ENCODE measurements at regions of chr14 and their contacts with region 1.

Region 1: GRCh38 chr14:69153131-69153872 is 383 bp upstream of the DCAF5 start:
- DNase-seq: peak; percentile 87 to 97
- ATAC-seq: peak; percentile 89 to 97 (median 92)
- H3K4me3 ChIP-seq: peak overlapping the region; percentile 95
- H3K4me3 Mint-ChIP-seq: peak overlapping the region; percentile 95
- H3K27ac ChIP-seq: peak overlapping the region; percentile 77
- H3K27ac Mint-ChIP-seq: peak overlapping the region; percentile 86 to 94
- H3K4me1 ChIP-seq: peaks cover 12% of the 10 kb centered on the region
- H3K4me1 Mint-ChIP-seq: peaks cover 36 to 37% of the 10 kb centered on the region in 2 donors
- H3K27me3 ChIP-seq: no peaks in the 10 kb centered on the region
- H3K27me3 Mint-ChIP-seq: no peaks in the 10 kb centered on the region
- CTCF ChIP-seq: no peak

Region 2: DNA sequence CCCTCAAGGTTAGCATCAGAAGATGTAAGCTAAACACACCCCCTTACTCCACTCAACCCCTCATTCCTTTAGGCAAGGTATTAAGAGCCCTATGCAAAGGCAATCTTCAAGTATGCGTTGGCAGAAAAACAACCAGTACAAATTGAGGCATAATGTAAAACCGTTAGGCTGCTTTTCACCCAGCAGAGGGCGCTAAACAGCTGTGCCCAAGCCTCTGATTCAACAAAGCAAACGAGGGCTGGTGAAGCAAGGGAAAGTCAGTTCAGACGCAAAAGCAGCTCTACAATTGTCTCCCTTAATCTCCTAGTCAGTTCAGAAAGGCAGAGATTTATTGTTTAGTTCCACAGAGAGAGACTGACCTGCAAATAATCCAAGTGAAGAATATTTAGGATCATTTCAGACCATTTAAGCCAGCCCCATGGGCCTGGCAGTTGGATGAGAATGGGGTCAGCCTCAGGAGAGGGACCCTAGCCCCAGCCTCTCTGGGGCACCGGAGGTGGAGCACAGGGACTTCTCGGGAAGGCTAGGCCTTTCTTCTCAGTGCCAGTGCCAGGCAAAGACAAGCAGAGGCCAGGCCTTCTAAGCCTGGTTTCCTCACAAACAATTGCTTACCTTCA is 23.9 kb before region 1 on chr14:
- intact Hi-C with region 1: loop called (anchors 2 kb)
- DNase-seq: peak; percentile 50 to 92
- ATAC-seq: peak; percentile 84 to 90 (median 87)
- H3K4me3 ChIP-seq: no peak overlapping the region
- H3K4me3 Mint-ChIP-seq: no peak overlapping the region
- H3K27ac ChIP-seq: peak overlapping the region; percentile 12
- H3K27ac Mint-ChIP-seq: peak overlapping the region; percentile 34 to 85
- H3K4me1 ChIP-seq: peaks cover 8% of the 10 kb centered on the region
- H3K4me1 Mint-ChIP-seq: peaks cover 88% of the 10 kb centered on the region in 2 donors
- H3K27me3 ChIP-seq: no peaks in the 10 kb centered on the region
- H3K27me3 Mint-ChIP-seq: no peaks in the 10 kb centered on the region
- CTCF ChIP-seq: peak; percentile 92

Region 3: DNA sequence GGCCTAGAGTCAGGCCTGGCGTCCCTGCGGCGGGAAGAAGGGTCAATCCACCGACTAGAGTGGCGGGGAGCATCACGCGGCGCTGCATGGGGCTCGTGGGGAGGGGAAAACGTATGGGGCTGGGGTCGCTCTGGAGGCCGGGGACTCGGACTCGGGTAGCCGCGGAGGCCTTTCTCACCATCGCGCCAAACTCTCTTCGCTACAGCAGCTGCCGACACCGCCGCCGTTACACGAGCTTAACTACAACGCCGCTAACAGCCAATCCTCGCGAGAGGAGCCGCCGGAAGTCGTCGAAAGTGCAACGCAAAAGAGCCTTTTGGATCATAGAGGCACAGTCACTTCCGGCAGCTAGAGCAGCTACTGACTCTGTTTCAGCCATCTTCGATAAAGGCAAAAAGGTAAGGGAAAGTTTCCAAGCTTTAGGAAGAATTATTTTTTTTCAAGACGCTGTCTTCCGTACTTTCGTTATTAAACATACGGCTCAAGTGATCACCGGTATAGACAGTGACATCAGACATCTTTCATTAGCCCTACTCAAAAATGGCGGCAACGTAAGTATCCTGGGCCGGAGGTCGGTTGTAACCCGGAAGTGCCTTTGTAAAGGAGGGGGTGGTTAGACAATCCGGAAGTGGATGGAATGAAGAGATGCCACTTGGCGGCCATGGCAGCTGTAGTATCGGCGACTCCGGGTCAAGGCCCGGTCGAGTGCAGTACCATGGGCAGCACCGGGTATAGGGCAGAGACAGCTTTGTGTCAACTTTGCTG is 244.9 kb after region 1 on chr14 and contains the starts of genes ERH and SLC39A9:
- intact Hi-C with region 1: loop called (anchors 5 kb)
- DNase-seq: peak; percentile 90 to 97
- ATAC-seq: peak; percentile 85 to 94 (median 88)
- H3K4me3 ChIP-seq: peak within 1 kb of the TSS; percentile 69
- H3K4me3 Mint-ChIP-seq: peak within 1 kb of the TSS; percentile 97
- H3K27ac ChIP-seq: peak within 1 kb of the TSS; percentile 93
- H3K27ac Mint-ChIP-seq: peak within 1 kb of the TSS; percentile 100
- H3K4me1 ChIP-seq: peaks cover 30% of the 10 kb centered on the region
- H3K4me1 Mint-ChIP-seq: peaks cover 46 to 54% of the 10 kb centered on the region in 2 donors
- H3K27me3 ChIP-seq: no peaks in the 10 kb centered on the region
- H3K27me3 Mint-ChIP-seq: no peaks in the 10 kb centered on the region
- CTCF ChIP-seq: no peak
- total RNA-seq, gene ERH: 103 to 120 (median 113) TPM
- total RNA-seq, gene SLC39A9: 30.9 to 34.6 (median 33.0) TPM

Region 4: DNA sequence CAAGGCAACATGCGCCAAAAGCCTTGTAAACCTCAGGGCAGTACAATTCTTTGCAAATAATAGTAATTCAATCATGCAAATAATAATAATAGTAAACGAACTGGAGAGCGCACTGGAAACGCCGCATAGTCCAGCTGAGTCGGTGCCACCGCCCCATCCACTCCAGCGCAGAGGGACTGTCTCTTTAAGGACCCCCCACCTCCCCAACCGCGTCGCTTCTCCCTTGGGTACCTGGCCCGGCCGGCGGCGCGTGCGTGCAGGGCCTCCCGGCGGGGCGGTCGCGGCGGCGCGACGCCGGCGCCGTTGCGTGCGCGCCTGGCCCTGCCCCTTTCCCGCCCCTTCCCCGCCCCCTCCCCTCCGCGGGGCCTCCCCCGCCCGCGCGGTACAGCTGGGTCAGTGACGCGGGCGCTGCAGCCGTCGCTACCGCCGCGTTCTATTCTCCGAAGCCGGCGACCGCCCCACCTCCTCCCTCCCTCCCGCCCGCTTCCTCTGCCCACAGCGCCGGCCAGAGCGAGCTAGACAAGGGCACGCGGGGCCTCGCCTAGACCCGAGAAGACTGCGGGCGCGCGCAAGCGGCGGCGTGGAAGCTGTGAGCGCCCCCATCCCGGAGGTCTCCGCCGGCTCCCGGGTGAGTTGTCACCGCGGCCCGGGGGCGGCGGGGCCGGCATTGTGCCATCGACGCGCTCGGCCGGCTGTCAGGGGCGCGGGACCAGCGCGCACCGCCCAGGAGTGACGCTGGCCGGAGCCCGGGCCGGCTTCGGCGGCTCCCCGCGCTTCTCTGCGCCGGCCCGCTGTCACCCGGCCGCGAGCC is 458.1 kb after region 1 on chr14 and contains the start of gene SUSD6:
- intact Hi-C with region 1: loop called (anchors 5 kb)
- DNase-seq: peak; percentile 78 to 95
- ATAC-seq: peak; percentile 79 to 92 (median 82)
- H3K4me3 ChIP-seq: peak within 1 kb of the TSS; percentile 88
- H3K4me3 Mint-ChIP-seq: peak within 1 kb of the TSS; percentile 89
- H3K27ac ChIP-seq: peak within 1 kb of the TSS; percentile 76
- H3K27ac Mint-ChIP-seq: peak within 1 kb of the TSS; percentile 95 to 96
- H3K4me1 ChIP-seq: peaks cover 48% of the 10 kb centered on the region
- H3K4me1 Mint-ChIP-seq: peaks cover 51 to 52% of the 10 kb centered on the region in 2 donors
- H3K27me3 ChIP-seq: no peaks in the 10 kb centered on the region
- H3K27me3 Mint-ChIP-seq: no peaks in the 10 kb centered on the region
- CTCF ChIP-seq: no peak
- total RNA-seq, gene SUSD6: 119 to 144 (median 140) TPM

Region 5: DNA sequence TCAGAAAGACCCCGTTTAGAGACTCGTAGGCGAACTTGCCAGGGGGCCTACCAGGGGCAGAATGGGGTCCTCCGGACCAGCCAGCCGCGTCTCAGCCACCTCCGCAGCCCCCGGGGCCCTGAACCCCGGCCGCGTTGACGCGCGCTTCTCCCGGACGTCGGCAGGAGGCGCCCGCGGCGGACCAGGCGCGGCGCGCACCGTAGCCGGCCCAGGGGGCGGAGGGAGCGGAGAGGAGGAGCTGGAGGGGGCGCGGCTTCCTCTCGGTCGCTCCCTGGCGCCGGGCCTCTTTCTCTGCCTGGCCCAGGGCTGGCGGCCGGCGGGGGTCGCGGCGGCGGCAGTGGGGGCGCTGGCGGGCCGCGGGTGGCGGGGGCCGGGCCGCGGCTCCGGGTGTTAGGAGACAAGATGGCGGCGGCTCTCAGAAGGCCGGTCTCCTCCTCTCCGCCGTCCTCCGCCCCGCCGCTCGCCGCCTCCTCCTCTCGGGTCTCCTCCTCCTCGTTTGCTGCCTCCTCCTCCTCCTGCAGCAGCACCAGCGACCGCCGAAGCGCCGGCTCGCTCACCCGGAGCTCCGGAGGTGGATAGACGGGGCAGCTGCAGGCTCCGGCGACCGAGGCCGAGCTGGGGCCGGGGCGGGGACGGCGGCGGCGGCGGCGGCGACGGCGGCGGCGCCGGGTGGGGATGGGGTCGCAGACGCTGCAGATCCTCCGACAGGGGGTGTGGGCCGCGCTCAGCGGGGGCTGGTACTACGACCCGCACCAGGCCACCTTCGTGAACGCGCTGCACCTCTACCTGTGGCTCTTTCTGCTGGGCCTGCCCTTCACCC is 1754.1 kb after region 1 on chr14 and contains the start of gene PCNX1:
- intact Hi-C with region 1: loop called (anchors 5 kb)
- DNase-seq: peak; percentile 89 to 93
- ATAC-seq: peak; percentile 81 to 92 (median 84)
- H3K4me3 ChIP-seq: peak within 1 kb of the TSS; percentile 97
- H3K4me3 Mint-ChIP-seq: peak within 1 kb of the TSS; percentile 93
- H3K27ac ChIP-seq: peak within 1 kb of the TSS; percentile 93
- H3K27ac Mint-ChIP-seq: peak within 1 kb of the TSS; percentile 92 to 100
- H3K4me1 ChIP-seq: peaks cover 15% of the 10 kb centered on the region
- H3K4me1 Mint-ChIP-seq: peaks cover 45 to 47% of the 10 kb centered on the region in 2 donors
- H3K27me3 ChIP-seq: no peaks in the 10 kb centered on the region
- H3K27me3 Mint-ChIP-seq: no peaks in the 10 kb centered on the region
- CTCF ChIP-seq: peak; percentile 85
- total RNA-seq, gene PCNX1: 79.8 to 124 (median 119) TPM